Activated CD4-positive, alpha-beta memory T cell treated with anti-CD3 and anti-CD28 coated beads for 36 hours (primary cell): ENCODE measurements at regions of chr12 and their contacts with region 1.

Region 1: DNA sequence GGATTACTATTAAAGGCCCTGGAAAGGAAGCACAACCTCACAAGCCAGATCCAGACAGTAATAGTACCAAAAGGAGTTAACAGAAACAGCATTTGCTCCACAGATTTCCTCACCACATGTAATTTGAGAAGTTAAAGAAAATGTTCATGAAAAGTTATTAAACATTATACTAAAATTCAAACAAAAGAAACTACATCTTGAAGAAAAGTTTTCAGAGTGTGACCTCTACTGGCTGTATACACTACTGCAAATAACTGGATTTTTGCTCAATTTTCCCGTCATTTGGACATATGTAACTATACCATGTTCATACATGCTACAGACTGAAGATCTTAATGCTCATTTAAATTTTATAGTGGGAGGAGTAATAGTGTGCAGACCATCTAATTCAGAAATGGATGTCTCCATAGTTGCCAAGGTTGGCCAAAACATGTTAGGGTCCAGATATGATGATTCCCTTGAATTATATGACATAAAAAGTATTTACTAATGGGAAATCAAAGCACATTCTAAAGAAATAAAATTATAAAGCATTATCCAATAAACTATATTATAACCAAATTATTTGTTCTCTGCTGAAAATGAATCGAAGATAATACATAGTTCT is 5.6 kb downstream of the KRR1 start:
- DNase-seq: no peak
- H3K4me3 Mint-ChIP-seq: no peak overlapping the region
- H3K27ac Mint-ChIP-seq: no peak overlapping the region
- H3K4me1 Mint-ChIP-seq: peaks cover 26% of the 10 kb centered on the region
- H3K27me3 Mint-ChIP-seq: no peaks in the 10 kb centered on the region

Region 2: GRCh38 chr12:75334384-75335030 is 171.3 kb before region 1 on chr12 and contains the start of gene GLIPR1L1:
- CTCF ChIA-PET with region 1: interaction called, 43 read pairs
- POLR2A ChIA-PET with region 1: no interaction called
- intact Hi-C with region 1: loop called (anchors 1 kb)
- DNase-seq: peak; percentile 88
- H3K4me3 Mint-ChIP-seq: peak within 1 kb of the TSS; percentile 59
- H3K27ac Mint-ChIP-seq: no peak within 1 kb of the TSS
- H3K4me1 Mint-ChIP-seq: peaks cover 22% of the 10 kb centered on the region
- H3K27me3 Mint-ChIP-seq: peaks cover 16% of the 10 kb centered on the region
- total RNA-seq, gene GLIPR1L1: not detected

Region 3: GRCh38 chr12:75427491-75427890 is 78.3 kb before region 1 on chr12:
- CTCF ChIA-PET with region 1: no interaction called
- POLR2A ChIA-PET with region 1: no interaction called
- intact Hi-C with region 1: no loop called
- DNase-seq: no peak
- H3K4me3 Mint-ChIP-seq: no peak overlapping the region
- H3K27ac Mint-ChIP-seq: no peak overlapping the region
- H3K4me1 Mint-ChIP-seq: no peaks in the 10 kb centered on the region
- H3K27me3 Mint-ChIP-seq: peaks cover 4% of the 10 kb centered on the region

Region 4: GRCh38 chr12:75437564-75437963 is 68.2 kb before region 1 on chr12:
- CTCF ChIA-PET with region 1: interaction called, 5 read pairs
- POLR2A ChIA-PET with region 1: no interaction called
- intact Hi-C with region 1: loop called (anchors 1 kb)
- DNase-seq: no peak
- H3K4me3 Mint-ChIP-seq: no peak overlapping the region
- H3K27ac Mint-ChIP-seq: no peak overlapping the region
- H3K4me1 Mint-ChIP-seq: peaks cover 7% of the 10 kb centered on the region
- H3K27me3 Mint-ChIP-seq: peaks cover 5% of the 10 kb centered on the region